Caco-2 (cell line): ENCODE measurements at regions of chr15 and their contacts with region 1.

Region 1: GRCh38 chr15:53808058-53808706 is 48.7 kb upstream of the WDR72 start:
- DNase-seq: no peak
- H3K4me3 ChIP-seq: no peak overlapping the region
- H3K4me3 Mint-ChIP-seq: no peak overlapping the region
- H3K27ac Mint-ChIP-seq: peak overlapping the region; percentile 70
- H3K4me1 ChIP-seq: peaks cover 57% of the 10 kb centered on the region
- H3K4me1 Mint-ChIP-seq: peaks cover 21% of the 10 kb centered on the region
- H3K27me3 ChIP-seq: no peaks in the 10 kb centered on the region
- H3K27me3 Mint-ChIP-seq: no peaks in the 10 kb centered on the region
- CTCF ChIP-seq: peak; percentile 52 to 59

Region 2: DNA sequence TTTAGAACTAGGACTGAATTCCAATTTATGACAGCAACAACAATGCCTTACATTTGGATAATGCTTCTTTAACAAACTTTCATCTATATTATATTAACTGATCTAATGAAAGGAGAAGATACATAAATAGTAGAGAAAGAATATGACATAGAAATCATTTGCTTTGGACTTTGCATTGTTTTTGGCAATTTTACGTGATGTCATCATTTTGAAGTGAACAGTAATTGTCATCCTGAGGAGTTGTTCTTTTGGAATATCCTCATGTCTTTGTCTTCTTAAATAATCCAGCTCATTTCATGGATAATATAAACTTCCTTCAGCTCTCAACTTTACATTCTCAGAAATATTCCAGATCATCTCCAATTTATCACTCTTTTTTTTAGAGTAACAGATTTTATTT is 32.7 kb before region 1 on chr15:
- CTCF ChIA-PET with region 1: no interaction called
- POLR2A ChIA-PET with region 1: no interaction called
- intact Hi-C with region 1: no loop called
- DNase-seq: no peak
- H3K4me3 ChIP-seq: no peak overlapping the region
- H3K4me3 Mint-ChIP-seq: no peak overlapping the region
- H3K27ac Mint-ChIP-seq: no peak overlapping the region
- H3K4me1 ChIP-seq: no peaks in the 10 kb centered on the region
- H3K4me1 Mint-ChIP-seq: no peaks in the 10 kb centered on the region
- H3K27me3 ChIP-seq: no peaks in the 10 kb centered on the region
- H3K27me3 Mint-ChIP-seq: no peaks in the 10 kb centered on the region
- CTCF ChIP-seq: no peak

Region 3: DNA sequence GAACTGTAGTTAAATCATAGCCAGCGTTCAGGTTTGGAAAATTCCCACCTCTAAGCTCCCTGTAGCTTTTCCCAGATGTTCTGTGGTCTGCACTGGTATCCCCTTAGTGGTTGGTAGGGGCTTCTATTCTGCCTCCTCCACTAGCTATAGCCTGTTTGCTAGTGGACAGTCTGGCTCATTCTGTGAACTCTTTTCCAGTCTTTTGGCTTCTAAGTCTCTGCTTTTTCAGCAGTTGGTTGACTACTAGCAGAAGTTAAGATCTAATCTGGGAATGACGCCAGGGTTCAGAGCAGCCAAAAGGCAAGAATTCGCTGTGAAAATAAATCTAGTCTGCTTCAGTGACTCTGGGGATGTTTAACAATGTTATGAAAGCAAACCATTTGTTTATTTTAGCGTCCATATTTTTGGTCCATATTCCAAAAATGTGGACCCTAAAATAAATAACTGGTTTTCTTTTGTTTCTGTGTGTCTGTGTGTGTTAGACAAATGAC is 25.0 kb after region 1 on chr15:
- CTCF ChIA-PET with region 1: interaction called, 16 read pairs
- POLR2A ChIA-PET with region 1: interaction called, 14 read pairs
- intact Hi-C with region 1: loop called (anchors 1 kb)
- DNase-seq: peak in 1 of 2 experiments; percentile 42
- H3K4me3 ChIP-seq: no peak overlapping the region
- H3K4me3 Mint-ChIP-seq: peak overlapping the region; percentile 44
- H3K27ac Mint-ChIP-seq: peak overlapping the region; percentile 91
- H3K4me1 ChIP-seq: peaks cover 86% of the 10 kb centered on the region
- H3K4me1 Mint-ChIP-seq: peaks cover 73% of the 10 kb centered on the region
- H3K27me3 ChIP-seq: no peaks in the 10 kb centered on the region
- H3K27me3 Mint-ChIP-seq: no peaks in the 10 kb centered on the region
- CTCF ChIP-seq: no peak

Region 4: GRCh38 chr15:53862386-53862785 is 54.2 kb after region 1 on chr15:
- CTCF ChIA-PET with region 1: interaction called, 4 read pairs
- POLR2A ChIA-PET with region 1: no interaction called
- intact Hi-C with region 1: loop called (anchors 1 kb)
- DNase-seq: peak; percentile 44 to 65
- H3K4me3 ChIP-seq: no peak overlapping the region; the same call in 1 of the 2 replicates
- H3K4me3 Mint-ChIP-seq: peak overlapping the region; percentile 60
- H3K27ac Mint-ChIP-seq: peak overlapping the region; percentile 93
- H3K4me1 ChIP-seq: peaks cover 45% of the 10 kb centered on the region
- H3K4me1 Mint-ChIP-seq: peaks cover 25% of the 10 kb centered on the region
- H3K27me3 ChIP-seq: no peaks in the 10 kb centered on the region
- H3K27me3 Mint-ChIP-seq: no peaks in the 10 kb centered on the region
- CTCF ChIP-seq: no peak

Region 5: DNA sequence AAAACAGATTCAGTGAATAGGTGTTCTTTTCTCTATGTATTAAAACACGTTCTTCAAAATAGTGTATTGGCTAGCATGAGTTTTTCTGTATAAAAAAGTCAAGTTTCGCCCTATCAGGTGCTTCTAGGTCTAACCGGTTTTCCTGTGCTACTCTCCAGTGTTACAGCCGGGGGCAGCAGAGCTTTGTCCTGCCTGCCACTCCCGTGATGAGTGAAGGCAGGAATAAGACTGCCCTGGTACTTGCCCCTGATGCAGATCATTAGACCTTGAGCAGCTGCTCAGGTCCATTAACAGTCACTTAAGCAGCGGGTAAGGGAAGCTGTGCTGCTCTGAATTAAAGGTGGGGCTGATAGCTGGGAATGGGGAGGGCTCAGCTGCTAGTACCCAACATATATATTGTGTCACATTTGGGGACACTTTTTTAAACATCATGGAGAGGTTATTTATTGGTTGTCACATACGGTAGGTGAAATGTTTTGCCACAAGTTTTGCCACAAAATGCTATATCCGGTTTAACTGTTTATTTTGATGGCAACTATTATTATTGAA is 168.7 kb after region 1 on chr15:
- CTCF ChIA-PET with region 1: no interaction called
- POLR2A ChIA-PET with region 1: no interaction called
- intact Hi-C with region 1: loop called (anchors 5 kb)
- DNase-seq: peak; percentile 53 to 55
- H3K4me3 ChIP-seq: no peak overlapping the region
- H3K4me3 Mint-ChIP-seq: no peak overlapping the region
- H3K27ac Mint-ChIP-seq: no peak overlapping the region
- H3K4me1 ChIP-seq: no peaks in the 10 kb centered on the region
- H3K4me1 Mint-ChIP-seq: no peaks in the 10 kb centered on the region
- H3K27me3 ChIP-seq: no peaks in the 10 kb centered on the region
- H3K27me3 Mint-ChIP-seq: no peaks in the 10 kb centered on the region
- CTCF ChIP-seq: peak; percentile 43 to 58

Region 6: DNA sequence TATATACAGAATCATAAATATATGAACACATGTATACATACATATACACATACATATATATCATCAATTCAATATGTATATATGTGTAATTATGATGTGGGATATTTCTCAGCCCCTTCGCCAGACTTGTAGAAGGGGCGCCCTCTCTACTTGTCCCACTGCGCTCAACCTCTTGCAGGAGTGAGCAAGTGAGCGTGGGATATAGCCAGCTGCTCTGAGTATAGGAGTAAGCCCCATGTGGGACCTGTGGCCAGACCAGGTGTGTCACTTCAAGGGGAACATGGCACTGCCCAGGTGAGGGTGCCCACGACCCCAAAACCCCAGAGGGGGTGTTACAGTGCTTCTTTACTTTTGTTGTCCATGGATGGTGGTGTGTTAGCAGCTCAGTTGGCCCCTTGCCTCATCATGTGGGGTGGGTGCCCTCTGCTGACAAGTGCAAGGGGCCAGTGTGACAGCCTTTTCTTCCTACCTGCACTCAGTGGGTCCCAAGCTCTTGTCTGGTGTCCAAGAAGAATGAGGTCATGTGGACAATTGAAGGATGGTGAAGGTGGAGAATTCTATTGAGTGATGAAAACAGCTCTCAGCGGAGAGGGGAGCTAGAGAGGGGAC is 474.1 kb after region 1 on chr15:
- CTCF ChIA-PET with region 1: interaction called, 3 read pairs
- POLR2A ChIA-PET with region 1: no interaction called
- intact Hi-C with region 1: loop called (anchors 2 kb)
- DNase-seq: peak in 1 of 2 experiments; percentile 11
- H3K4me3 ChIP-seq: no peak overlapping the region
- H3K4me3 Mint-ChIP-seq: no peak overlapping the region
- H3K27ac Mint-ChIP-seq: no peak overlapping the region
- H3K4me1 ChIP-seq: no peaks in the 10 kb centered on the region
- H3K4me1 Mint-ChIP-seq: no peaks in the 10 kb centered on the region
- H3K27me3 ChIP-seq: no peaks in the 10 kb centered on the region
- H3K27me3 Mint-ChIP-seq: no peaks in the 10 kb centered on the region
- CTCF ChIP-seq: no peak